ENCODE measurements at regions of chr13 and their contacts with region 1.

Region 1: GRCh38 chr13:37029617-37030016 is 29.0 kb downstream of the EXOSC8 start:
- DNase-seq: no peak
- ATAC-seq: no peak
- H3K4me3 ChIP-seq: no peak overlapping the region
- H3K4me3 Mint-ChIP-seq: no peak overlapping the region
- H3K27ac ChIP-seq: no peak overlapping the region
- H3K27ac Mint-ChIP-seq: no peak overlapping the region
- H3K4me1 ChIP-seq: no peaks in the 10 kb centered on the region
- H3K4me1 Mint-ChIP-seq: peaks cover 5% of the 10 kb centered on the region
- H3K27me3 ChIP-seq: no peaks in the 10 kb centered on the region
- H3K27me3 Mint-ChIP-seq: no peaks in the 10 kb centered on the region
- CTCF ChIP-seq: no peak

Region 2: DNA sequence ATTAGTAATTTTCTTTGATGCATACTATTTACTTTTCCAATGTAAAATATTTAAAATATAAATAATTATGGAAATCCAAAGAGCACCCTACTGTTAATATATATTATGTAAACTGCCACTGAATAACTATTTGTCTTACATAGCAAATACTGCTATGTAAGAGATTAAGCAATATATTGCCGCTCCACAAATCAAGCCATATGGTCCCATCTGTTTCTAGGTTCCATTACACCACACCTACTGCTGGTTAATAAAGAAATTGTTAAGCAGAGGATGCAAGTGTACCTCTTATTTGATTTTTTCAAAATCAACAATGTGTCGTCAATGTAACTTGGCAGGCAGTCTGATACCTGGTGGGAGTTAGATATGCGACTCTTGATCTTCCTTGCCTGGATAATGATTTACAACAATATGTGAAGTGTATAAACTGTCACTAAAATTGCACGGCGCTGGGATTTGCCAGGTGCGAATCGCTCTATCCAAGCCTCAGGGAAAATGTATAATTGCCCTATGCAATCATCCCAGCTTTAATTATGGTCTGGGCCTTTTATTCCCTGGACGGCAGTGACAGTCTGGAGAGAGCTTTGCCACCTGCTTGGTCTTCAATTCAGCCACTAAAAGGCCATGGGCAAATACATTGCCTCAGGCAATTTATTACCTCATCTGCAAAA is 125.6 kb before region 1 on chr13:
- CTCF ChIA-PET with region 1: no interaction called
- POLR2A ChIA-PET with region 1: no interaction called
- intact Hi-C with region 1: no loop called
- DNase-seq: no peak
- ATAC-seq: no peak
- H3K4me3 ChIP-seq: no peak overlapping the region
- H3K4me3 Mint-ChIP-seq: no peak overlapping the region
- H3K27ac ChIP-seq: no peak overlapping the region
- H3K27ac Mint-ChIP-seq: no peak overlapping the region
- H3K4me1 ChIP-seq: no peaks in the 10 kb centered on the region
- H3K4me1 Mint-ChIP-seq: no peaks in the 10 kb centered on the region
- H3K27me3 ChIP-seq: no peaks in the 10 kb centered on the region
- H3K27me3 Mint-ChIP-seq: peaks cover 14% of the 10 kb centered on the region
- CTCF ChIP-seq: no peak

Region 3: GRCh38 chr13:37049810-37050209 is 20.2 kb after region 1 on chr13:
- CTCF ChIA-PET with region 1: no interaction called
- POLR2A ChIA-PET with region 1: no interaction called
- intact Hi-C with region 1: loop called in 1 of 2 experiments (anchors 2 kb)
- DNase-seq: no peak
- ATAC-seq: no peak
- H3K4me3 ChIP-seq: no peak overlapping the region
- H3K4me3 Mint-ChIP-seq: no peak overlapping the region
- H3K27ac ChIP-seq: no peak overlapping the region
- H3K27ac Mint-ChIP-seq: no peak overlapping the region
- H3K4me1 ChIP-seq: no peaks in the 10 kb centered on the region
- H3K4me1 Mint-ChIP-seq: peaks cover 46% of the 10 kb centered on the region
- H3K27me3 ChIP-seq: no peaks in the 10 kb centered on the region
- H3K27me3 Mint-ChIP-seq: no peaks in the 10 kb centered on the region
- CTCF ChIP-seq: no peak

Measured in CD8-positive, alpha-beta T cell (primary cell).